GM18951 (cell line): ENCODE measurements at regions of chr5 and their contacts with region 1.

Region 1: DNA sequence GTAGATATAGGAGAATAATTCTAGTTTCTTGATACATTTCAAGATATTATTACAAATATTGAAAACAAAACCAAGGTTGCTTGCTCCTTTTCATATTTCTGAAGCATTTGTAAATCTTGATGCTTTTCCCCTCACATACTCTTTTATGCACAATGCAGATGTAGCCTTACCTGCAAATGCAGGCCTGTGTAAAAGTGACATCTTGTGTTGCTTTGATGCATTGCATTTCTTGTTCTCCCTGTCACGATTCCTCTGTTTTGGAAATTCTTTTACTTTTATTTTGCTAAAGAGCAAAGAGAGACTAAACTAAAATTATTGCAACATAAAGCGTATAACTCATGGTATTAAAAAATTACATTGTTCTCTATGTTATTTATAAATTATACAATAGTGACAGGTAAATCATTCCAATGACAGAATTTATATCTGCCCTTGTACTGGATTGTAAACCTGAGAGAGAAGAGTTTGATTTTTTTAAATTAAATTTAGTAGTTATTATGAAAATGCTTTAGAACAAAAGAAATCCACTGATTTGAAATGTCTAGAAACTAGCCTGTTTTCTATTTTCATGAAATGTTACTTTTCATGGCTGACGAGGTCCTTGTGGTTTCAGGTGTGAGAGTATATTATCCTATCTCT is 970.0 kb downstream of the MAT2B start:
- POLR2A ChIP-seq: no peak

Region 2: DNA sequence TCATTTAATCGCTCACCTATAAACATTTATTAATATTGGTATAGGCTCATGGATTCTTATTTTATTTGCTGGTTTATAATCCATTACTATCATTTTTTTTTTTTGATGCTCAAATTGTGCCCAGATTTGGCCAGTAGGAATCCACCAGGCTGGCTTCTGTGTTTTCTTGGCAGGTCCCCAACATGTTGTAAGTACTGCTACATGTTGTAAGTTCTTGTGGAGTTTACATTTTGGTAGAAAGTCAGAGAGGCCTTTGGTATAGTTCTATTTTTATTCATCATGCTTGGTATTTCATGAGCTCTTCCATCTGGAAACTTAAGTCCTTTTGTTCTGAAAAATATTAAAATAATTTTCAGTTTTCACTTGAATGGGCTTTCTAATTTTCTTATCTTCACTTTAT is 922.9 kb before region 1 on chr5:
- in situ Hi-C with region 1: no loop called
- POLR2A ChIP-seq: no peak

Region 3: GRCh38 chr5:163649522-163649921 is 825.9 kb before region 1 on chr5:
- in situ Hi-C with region 1: no loop called
- POLR2A ChIP-seq: no peak

Region 4: DNA sequence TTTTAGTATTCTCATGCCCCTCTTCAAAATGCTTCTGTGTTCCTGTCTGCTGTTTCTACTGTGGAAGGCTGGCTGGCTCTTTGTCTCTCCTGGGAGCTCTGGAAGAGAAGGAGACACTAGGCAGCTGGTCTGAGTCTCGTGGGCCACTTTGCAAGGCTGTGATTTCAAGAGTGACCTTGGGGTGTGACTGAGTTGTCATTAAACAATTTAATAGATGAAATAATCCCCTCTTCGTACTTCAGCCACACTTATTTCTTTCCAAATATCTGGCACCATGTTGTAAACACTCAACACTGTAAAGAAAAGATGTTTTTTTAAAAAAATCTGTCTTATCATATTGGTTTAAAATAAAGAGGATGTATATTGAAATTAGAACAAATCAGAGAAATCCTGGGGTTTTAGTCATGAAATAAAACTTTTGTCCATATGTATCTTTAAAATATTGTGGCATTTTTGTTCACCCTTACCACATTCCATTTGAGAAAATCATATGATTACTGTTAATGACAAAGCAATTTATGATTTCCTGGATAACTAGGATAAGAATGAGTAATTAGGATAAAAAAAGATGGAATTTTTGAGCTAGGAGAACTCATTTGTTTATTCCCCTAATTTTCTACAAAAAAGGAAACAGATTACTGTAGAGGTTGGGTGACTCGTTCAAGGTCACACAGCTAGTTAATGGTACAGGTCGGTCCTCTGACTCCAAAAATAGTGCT is 769.2 kb before region 1 on chr5:
- in situ Hi-C with region 1: loop called (anchors 25 kb)
- POLR2A ChIP-seq: no peak